ENCODE measurements at regions of chr6 and their contacts with region 1.

Region 1: GRCh38 chr6:89080542-89081422 is at the start of gene PNRC1:
- DNase-seq: peak; percentile 99
- H3K4me3 ChIP-seq: peak within 1 kb of the TSS; percentile 96
- H3K27ac ChIP-seq: peak within 1 kb of the TSS; percentile 95
- H3K4me1 ChIP-seq: peaks cover 12% of the 10 kb centered on the region
- H3K27me3 ChIP-seq: no peaks in the 10 kb centered on the region
- CTCF ChIP-seq: no peak
- total RNA-seq, gene PNRC1: 26.4 and 36.1 TPM in 2 replicates

Region 2: DNA sequence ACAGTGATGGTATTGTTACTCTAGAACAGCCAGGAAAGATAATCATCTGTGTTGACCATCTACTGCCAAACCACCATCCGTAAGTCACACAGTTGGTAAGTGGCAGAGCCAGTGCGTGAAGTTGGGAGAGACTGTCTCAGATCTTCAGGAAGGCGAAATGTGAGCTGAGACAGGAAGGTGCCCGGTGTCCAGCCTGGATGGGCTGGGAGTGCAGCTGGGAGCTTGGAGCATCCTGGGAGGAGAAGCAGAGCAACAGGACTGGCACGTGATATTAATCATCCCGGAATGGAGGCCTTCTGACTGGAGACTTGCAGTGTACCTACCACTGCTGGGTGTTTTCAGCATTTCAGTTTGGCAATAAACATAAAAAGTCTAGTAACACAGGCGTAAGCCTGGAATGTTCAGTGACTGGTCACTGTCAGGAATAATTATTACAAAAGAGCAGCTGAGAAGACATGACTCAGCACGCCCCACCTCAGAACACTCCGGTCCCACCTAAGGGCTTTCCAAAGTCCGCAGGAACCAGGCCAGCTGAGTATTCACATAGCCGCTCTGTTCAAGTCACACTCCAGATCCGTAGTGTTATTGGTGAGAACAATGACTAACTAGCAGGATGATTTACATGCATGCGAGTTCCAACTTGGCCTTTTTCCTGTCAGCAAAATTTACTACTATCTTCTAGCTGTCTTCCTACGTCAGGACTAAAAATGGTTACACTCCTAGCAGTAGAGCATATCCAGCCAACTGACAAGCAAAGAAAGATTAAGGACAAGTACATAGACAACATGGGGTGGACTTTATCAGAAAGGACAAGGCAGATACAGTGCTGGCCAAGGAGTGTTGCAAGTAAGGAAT is 45.3 kb before region 1 on chr6:
- CTCF ChIA-PET with region 1: no interaction called
- POLR2A ChIA-PET with region 1: interaction called, 4 read pairs
- intact Hi-C with region 1: loop called (anchors 5 kb)
- DNase-seq: peak; percentile 77
- H3K4me3 ChIP-seq: peak overlapping the region; percentile 20
- H3K27ac ChIP-seq: peak overlapping the region; percentile 92
- H3K4me1 ChIP-seq: peaks cover 16% of the 10 kb centered on the region
- H3K27me3 ChIP-seq: no peaks in the 10 kb centered on the region
- CTCF ChIP-seq: no peak

Region 3: DNA sequence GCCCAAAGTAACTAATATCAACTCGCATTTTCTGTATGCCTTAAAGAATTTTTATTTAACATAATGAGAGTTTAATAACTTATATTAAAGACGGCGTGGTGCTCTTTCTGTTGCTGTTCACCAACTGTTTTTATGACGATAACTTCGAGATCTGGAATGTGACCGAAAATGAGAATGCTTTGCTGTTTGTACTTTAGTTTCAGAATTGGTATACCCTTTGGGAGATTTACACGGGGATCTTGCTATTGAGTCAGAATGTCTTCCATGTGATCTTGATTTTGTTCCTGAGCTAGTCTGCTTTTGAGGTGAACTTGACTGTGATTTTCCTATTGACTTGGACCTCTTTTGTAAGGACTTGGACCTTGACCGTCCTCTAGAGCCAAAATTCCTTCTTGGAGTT is 17.7 kb after region 1 on chr6:
- CTCF ChIA-PET with region 1: no interaction called
- POLR2A ChIA-PET with region 1: interaction called, 17 read pairs
- intact Hi-C with region 1: no loop called
- DNase-seq: no peak
- H3K4me3 ChIP-seq: no peak overlapping the region
- H3K27ac ChIP-seq: no peak overlapping the region
- H3K4me1 ChIP-seq: no peaks in the 10 kb centered on the region
- H3K27me3 ChIP-seq: no peaks in the 10 kb centered on the region
- CTCF ChIP-seq: no peak

Region 4: DNA sequence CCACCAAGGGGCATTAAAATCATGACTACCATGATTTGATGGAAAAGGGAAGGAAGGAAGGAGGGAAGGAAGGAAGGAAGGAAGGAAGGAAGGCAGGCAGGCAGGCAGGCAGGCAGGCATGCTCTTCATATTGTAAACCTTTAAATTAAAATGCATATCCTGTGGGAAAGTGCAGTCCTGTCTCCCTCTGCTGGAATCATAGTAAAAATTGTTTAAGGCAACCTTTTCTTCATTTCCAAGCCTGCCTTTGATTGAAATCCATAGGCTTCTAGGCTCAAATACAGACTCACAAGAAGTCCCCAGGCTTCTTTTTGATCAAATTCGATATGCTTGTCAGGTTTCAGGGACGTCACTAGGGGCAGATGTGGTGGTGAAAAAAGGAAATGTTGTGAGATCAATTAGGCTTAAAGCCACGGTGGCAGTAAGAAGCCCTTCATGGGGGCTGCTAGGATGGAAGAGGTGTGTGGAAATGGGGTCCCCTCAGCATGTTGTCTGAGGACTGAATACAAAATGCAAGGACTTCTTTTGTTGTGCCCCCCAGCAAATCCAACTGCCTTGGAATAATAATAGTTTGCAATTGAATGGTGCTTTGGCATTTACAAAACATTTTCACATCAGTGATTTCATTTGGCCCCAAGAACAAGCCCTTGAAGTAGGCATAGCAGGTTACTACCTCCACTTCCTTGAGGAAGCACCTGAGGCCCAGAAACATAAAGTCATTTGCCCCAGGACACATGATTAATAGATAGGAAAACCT is 162.0 kb after region 1 on chr6:
- CTCF ChIA-PET with region 1: no interaction called
- POLR2A ChIA-PET with region 1: no interaction called
- intact Hi-C with region 1: loop called (anchors 5 kb)
- DNase-seq: peak; percentile 91
- H3K4me3 ChIP-seq: no peak overlapping the region
- H3K27ac ChIP-seq: peak overlapping the region; percentile 63
- H3K4me1 ChIP-seq: peaks cover 37% of the 10 kb centered on the region
- H3K27me3 ChIP-seq: no peaks in the 10 kb centered on the region
- CTCF ChIP-seq: peak; percentile 68